Psoas muscle (tissue), 8 donors: ENCODE measurements at regions of chr18 and their contacts with region 1.

Region 1: DNA sequence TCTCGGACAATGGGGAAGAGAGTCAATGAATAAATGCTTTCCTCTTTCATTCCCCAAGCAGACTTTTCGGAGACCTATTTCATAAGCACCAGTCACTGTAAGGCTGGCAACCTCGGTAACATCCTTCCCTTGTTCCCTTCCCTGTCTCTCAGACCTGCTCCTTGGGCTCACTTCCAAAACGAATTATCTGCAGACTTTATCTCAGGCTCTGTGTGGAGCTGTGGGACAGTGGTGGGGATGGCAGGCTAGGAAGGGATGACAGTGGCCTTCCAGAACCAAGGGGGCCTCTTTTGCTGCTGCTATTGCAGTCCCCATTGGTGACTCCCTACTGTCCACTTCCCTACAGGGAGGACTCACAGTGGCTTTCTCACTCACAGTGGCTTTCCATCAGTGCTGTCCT is 185.6 kb upstream of the MEX3C start:
- DNase-seq: no peak
- ATAC-seq: peak in 2 of 4 donors; percentile 19 to 28
- H3K4me3 ChIP-seq: no peak overlapping the region
- H3K27ac ChIP-seq: no peak overlapping the region
- H3K4me1 ChIP-seq: no peaks in the 10 kb centered on the region
- H3K27me3 ChIP-seq: no peaks in the 10 kb centered on the region
- CTCF ChIP-seq: no peak

Region 2: GRCh38 chr18:50775222-50775621 is 607.9 kb before region 1 on chr18:
- intact Hi-C with region 1: no loop called
- DNase-seq: no peak
- ATAC-seq: no peak
- H3K4me3 ChIP-seq: no peak overlapping the region
- H3K27ac ChIP-seq: no peak overlapping the region
- H3K4me1 ChIP-seq: no peaks in the 10 kb centered on the region
- H3K27me3 ChIP-seq: no peaks in the 10 kb centered on the region
- CTCF ChIP-seq: no peak

Region 3: GRCh38 chr18:51278045-51278649 is 105.0 kb before region 1 on chr18:
- intact Hi-C with region 1: loop called in 1 of 2 experiments (anchors 10 kb)
- DNase-seq: no peak
- ATAC-seq: peak; percentile 40 to 69 (median 54)
- H3K4me3 ChIP-seq: no peak overlapping the region
- H3K27ac ChIP-seq: no peak overlapping the region
- H3K4me1 ChIP-seq: peaks cover 11% of the 10 kb centered on the region
- H3K27me3 ChIP-seq: no peaks in the 10 kb centered on the region
- CTCF ChIP-seq: peak; percentile 50

Region 4: GRCh38 chr18:51569153-51569552 is 186.0 kb after region 1 on chr18:
- intact Hi-C with region 1: no loop called
- DNase-seq: no peak
- ATAC-seq: peak in 3 of 4 donors; percentile 19 to 39 (median 30)
- H3K4me3 ChIP-seq: no peak overlapping the region
- H3K27ac ChIP-seq: no peak overlapping the region
- H3K4me1 ChIP-seq: no peaks in the 10 kb centered on the region
- H3K27me3 ChIP-seq: no peaks in the 10 kb centered on the region
- CTCF ChIP-seq: no peak